Heart right ventricle (tissue), 16 donors: ENCODE measurements at regions of chr20 and their contacts with region 1.

Region 1: DNA sequence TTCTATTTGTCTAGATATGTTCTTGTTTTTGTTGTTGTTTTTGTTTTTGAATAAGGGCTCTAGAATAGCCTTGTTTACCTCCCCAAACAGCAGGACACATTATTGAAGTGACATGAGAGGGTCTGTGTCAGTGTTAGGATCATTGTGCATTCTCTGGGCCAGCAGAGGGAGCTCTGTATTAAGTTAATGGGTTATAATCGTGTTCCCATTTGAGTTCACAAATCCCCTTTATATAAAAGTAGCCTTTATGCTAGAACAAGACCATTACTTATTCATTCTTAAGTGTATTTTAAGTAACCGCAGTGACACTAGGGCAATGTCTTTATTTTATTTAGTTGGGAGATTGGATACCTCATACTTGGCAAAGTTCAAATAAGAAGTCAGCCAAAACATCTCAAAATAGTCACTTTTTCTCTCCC is 44.8 kb downstream of the STK4 start:
- DNase-seq: peak in 1 of 2 donors; percentile 50
- ATAC-seq: peak; percentile 55 to 79 (median 74)
- H3K4me3 ChIP-seq: no peak overlapping the region
- H3K27ac ChIP-seq: no peak overlapping the region
- H3K4me1 ChIP-seq: peaks cover 0 to 27% (median 18%) of the 10 kb centered on the region in 9 donors
- H3K27me3 ChIP-seq: no peaks in the 10 kb centered on the region
- CTCF ChIP-seq: peak; percentile 32 to 87 (median 73)

Region 2: GRCh38 chr20:45052698-45053429 is 41.7 kb after region 1 on chr20:
- intact Hi-C with region 1: loop called in 2 of 10 experiments (anchors 5 kb)
- DNase-seq: no peak
- ATAC-seq: peak in 2 of 8 donors; percentile 14 to 26
- H3K4me3 ChIP-seq: no peak overlapping the region
- H3K27ac ChIP-seq: peak overlapping the region in 3 of 10 donors; percentile 23 to 39 (median 32)
- H3K4me1 ChIP-seq: peaks cover 9 to 49% (median 41%) of the 10 kb centered on the region in 9 donors
- H3K27me3 ChIP-seq: no peaks in the 10 kb centered on the region
- CTCF ChIP-seq: no peak

Region 3: DNA sequence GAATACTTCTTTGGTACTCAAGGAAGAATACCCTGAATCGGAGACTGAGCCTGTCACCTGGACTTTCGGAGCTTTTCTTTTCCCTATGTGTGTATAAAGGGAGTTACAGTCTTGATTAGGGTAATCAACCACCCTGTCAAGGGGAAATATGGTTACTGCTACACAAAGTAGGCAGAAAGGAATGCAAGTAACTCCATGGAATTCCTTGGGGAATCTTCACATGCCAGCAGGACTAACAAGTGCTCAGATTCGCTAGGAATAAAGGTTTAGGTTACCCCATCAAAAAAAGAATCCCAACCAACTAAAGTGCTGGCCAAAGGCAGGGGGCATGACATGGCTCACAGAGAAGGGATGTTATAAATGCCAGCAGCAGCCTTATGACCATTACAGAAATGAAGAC is 79.4 kb after region 1 on chr20:
- intact Hi-C with region 1: loop called in 5 of 10 experiments (anchors 5 kb)
- DNase-seq: no peak
- ATAC-seq: no peak
- H3K4me3 ChIP-seq: no peak overlapping the region
- H3K27ac ChIP-seq: no peak overlapping the region
- H3K4me1 ChIP-seq: no peaks in the 10 kb centered on the region
- H3K27me3 ChIP-seq: peaks cover 0 to 6% (median 0%) of the 10 kb centered on the region in 7 donors
- CTCF ChIP-seq: no peak

Region 4: GRCh38 chr20:45095753-45096371 is 84.7 kb after region 1 on chr20:
- intact Hi-C with region 1: loop called in 6 of 10 experiments (anchors 2 to 5 kb)
- DNase-seq: peak in 1 of 2 donors; percentile 57
- ATAC-seq: peak in 6 of 8 donors; percentile 38 to 71 (median 54)
- H3K4me3 ChIP-seq: no peak overlapping the region
- H3K27ac ChIP-seq: no peak overlapping the region
- H3K4me1 ChIP-seq: peaks cover 2 to 14% (median 7%) of the 10 kb centered on the region in 9 donors
- H3K27me3 ChIP-seq: peaks cover 0 to 54% (median 50%) of the 10 kb centered on the region in 7 donors
- CTCF ChIP-seq: peak; percentile 55 to 78 (median 72)

Region 5: DNA sequence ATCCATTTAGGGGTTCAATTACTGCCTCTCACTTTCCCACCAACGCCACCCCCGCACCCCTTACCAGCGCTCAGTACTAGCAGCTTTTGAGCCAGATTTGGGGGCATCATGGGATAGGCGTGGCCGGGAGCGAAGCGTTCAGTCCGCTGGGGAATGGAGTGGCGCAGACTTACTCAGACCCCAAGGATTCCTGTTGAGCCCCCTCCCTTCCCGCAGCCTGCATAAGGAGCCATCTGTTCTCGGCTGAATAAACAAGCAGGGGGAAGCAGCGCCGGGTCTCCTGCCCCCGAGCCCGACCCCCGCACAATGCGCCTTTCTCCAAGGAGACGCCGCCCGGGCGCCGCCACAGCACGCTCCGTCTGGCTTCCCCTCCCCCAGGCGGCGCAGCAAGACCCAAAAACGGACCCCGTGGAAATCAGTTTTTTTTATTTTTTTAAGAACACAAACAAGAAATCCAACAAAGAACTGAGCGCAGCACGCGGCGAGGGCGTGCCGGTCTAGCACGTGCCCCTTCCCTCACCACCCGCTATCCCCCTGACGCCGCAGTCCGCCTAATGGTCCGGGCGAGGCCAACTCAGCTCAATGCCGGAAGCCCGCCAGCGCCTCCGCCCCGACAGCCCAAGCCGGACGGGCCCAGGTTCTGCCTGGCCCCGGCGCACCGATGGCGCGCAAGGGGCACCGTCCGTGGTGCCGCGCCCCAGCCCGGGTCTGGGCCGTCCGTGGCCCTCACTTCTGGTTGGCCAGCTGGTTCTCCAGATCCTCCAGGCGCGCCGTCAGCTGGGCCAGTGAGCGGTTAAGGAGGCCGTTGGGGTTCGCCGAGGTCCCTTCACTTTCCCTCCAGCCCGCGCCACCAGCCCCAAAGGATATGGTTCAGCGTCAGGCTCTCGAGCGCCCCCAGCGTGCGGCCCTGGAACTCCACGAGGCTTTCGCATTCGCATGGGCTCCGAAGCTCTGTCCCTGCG is 282.2 kb after region 1 on chr20:
- intact Hi-C with region 1: loop called in 3 of 10 experiments (anchors 2 to 10 kb)
- DNase-seq: peak; percentile 77 to 82
- ATAC-seq: peak; percentile 79 to 90 (median 86)
- H3K4me3 ChIP-seq: peak overlapping the region; percentile 13 to 61 (median 52)
- H3K27ac ChIP-seq: no peak overlapping the region
- H3K4me1 ChIP-seq: peaks cover 0 to 21% (median 9%) of the 10 kb centered on the region in 9 donors
- H3K27me3 ChIP-seq: peaks cover 5 to 56% (median 43%) of the 10 kb centered on the region in 7 donors
- CTCF ChIP-seq: peak; percentile 87 to 96 (median 93)